Naive thymus-derived CD4-positive, alpha-beta T cell (primary cell): ENCODE measurements at regions of chr5 and their contacts with region 1.

Region 1: GRCh38 chr5:151115274-151115905 is 34.6 kb upstream of the TNIP1 start:
- DNase-seq: peak; percentile 49 to 72 (median 67)
- ATAC-seq: peak; percentile 95
- H3K4me3 ChIP-seq: no peak overlapping the region
- H3K4me3 Mint-ChIP-seq: no peak overlapping the region
- H3K27ac ChIP-seq: no peak overlapping the region
- H3K27ac Mint-ChIP-seq: peak overlapping the region in 2 of 9 donors; percentile 58 to 59
- H3K4me1 ChIP-seq: no peaks in the 10 kb centered on the region
- H3K4me1 Mint-ChIP-seq: peaks cover 4 to 17% (median 12%) of the 10 kb centered on the region in 7 donors
- H3K27me3 ChIP-seq: no peaks in the 10 kb centered on the region
- H3K27me3 Mint-ChIP-seq: no peaks in the 10 kb centered on the region

Region 2: DNA sequence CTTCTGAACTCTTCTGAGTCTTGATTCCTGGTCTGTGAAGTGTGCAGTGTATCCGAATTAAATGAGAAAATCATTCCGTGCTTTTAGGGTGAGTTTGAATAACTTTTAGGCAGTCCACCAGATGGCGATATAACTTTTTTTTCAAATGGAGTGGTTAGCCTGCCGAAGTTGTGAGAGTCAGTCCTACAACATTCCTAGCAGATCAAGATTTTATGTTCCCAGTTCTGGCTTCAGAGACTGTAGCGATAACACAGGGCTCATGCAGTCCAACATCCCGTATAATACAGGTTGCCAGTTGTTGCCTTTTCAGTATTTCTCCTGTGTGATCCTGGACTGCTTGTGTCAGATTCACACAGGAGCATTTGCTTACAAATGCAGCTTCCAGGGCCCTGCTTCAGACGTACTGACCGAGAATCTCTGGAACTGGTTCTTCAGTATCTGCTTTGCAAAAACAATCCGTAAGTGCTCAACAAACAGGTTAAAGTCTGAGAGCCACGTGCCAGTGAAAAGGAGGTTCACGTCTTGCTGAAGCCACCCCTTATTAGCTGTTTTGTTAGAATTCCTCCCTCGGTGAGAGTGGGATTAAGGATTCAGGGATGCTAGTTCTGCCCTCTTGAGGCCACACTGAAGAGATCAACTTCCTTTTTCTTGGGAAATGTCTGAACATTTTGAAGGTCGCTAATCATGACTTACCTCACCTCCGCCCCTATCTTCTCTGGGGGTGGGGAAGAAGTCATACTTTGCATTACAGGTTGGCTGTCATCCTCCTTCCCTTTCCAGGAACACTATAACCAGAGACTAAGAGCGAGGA is 314.1 kb before region 1 on chr5:
- CTCF ChIA-PET with region 1: interaction called, 5 read pairs
- POLR2A ChIA-PET with region 1: no interaction called
- intact Hi-C with region 1: loop called (anchors 1 to 5 kb)
- DNase-seq: peak in 7 of 9 donors; percentile 25 to 53 (median 43)
- ATAC-seq: peak; percentile 55
- H3K4me3 ChIP-seq: no peak overlapping the region
- H3K4me3 Mint-ChIP-seq: peak overlapping the region in 1 of 10 donors; percentile 18
- H3K27ac ChIP-seq: no peak overlapping the region
- H3K27ac Mint-ChIP-seq: no peak overlapping the region
- H3K4me1 ChIP-seq: no peaks in the 10 kb centered on the region
- H3K4me1 Mint-ChIP-seq: peaks cover 0 to 18% (median 5%) of the 10 kb centered on the region in 7 donors
- H3K27me3 ChIP-seq: no peaks in the 10 kb centered on the region
- H3K27me3 Mint-ChIP-seq: peaks cover 0 to 16% (median 5%) of the 10 kb centered on the region in 5 donors

Region 3: GRCh38 chr5:151002250-151002649 is 113.1 kb before region 1 on chr5:
- CTCF ChIA-PET with region 1: interaction called, 3 read pairs
- POLR2A ChIA-PET with region 1: no interaction called
- intact Hi-C with region 1: loop called (anchors 1 to 2 kb)
- DNase-seq: no peak
- ATAC-seq: no peak
- H3K4me3 ChIP-seq: no peak overlapping the region
- H3K4me3 Mint-ChIP-seq: no peak overlapping the region
- H3K27ac ChIP-seq: no peak overlapping the region
- H3K27ac Mint-ChIP-seq: no peak overlapping the region
- H3K4me1 ChIP-seq: no peaks in the 10 kb centered on the region
- H3K4me1 Mint-ChIP-seq: peaks cover 0 to 4% (median 0%) of the 10 kb centered on the region in 7 donors
- H3K27me3 ChIP-seq: no peaks in the 10 kb centered on the region
- H3K27me3 Mint-ChIP-seq: peaks cover 0 to 11% (median 4%) of the 10 kb centered on the region in 5 donors

Region 4: DNA sequence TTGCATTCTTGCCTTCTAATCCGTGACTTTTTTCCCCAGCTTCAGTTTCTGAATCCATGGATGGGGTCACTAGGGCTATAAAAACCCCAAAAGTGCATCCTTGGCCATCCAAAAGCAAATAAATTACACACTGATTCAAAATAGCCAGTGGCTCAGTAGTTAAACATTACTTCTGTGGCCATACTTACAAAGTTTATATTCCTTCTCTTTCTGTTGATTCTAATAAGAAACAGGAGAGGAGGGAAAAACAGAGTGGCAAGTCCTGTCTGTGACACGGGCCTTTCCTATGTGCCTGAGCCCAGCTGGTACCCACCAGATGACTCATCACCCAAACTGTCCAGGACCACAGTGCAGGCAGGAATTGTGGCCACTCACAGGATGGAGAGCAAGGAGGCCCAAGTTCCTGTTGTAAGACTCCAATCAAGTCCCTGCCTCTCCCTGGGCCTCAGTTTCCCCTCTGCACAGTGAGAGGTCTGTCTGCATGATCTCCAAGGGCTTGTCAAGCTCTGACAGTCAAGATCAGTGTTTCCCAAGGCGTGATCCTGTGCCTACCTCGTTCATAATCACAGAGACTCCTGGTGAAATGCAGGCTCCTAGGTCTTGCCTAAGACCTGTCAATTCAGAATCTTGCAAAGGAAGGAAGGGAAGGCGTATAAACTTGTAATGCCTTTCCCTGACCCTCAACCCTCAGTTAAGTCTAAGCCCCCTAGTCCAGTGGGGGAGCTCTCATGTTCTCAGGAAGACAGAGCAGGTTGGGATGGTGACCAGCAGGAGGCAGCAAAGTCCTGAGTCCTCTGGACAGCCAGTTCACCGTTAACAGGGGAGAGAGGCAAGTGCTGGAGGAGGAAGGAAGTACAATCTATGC is 64.1 kb before region 1 on chr5:
- CTCF ChIA-PET with region 1: interaction called, 238 read pairs
- POLR2A ChIA-PET with region 1: interaction called, 17 read pairs
- intact Hi-C with region 1: loop called (anchors 1 kb)
- DNase-seq: peak; percentile 39 to 68 (median 63)
- ATAC-seq: peak; percentile 85
- H3K4me3 ChIP-seq: no peak overlapping the region
- H3K4me3 Mint-ChIP-seq: no peak overlapping the region
- H3K27ac ChIP-seq: no peak overlapping the region
- H3K27ac Mint-ChIP-seq: peak overlapping the region in 7 of 9 donors; percentile 29 to 63 (median 44)
- H3K4me1 ChIP-seq: no peaks in the 10 kb centered on the region
- H3K4me1 Mint-ChIP-seq: peaks cover 0 to 33% (median 7%) of the 10 kb centered on the region in 7 donors
- H3K27me3 ChIP-seq: no peaks in the 10 kb centered on the region
- H3K27me3 Mint-ChIP-seq: no peaks in the 10 kb centered on the region

Region 5: DNA sequence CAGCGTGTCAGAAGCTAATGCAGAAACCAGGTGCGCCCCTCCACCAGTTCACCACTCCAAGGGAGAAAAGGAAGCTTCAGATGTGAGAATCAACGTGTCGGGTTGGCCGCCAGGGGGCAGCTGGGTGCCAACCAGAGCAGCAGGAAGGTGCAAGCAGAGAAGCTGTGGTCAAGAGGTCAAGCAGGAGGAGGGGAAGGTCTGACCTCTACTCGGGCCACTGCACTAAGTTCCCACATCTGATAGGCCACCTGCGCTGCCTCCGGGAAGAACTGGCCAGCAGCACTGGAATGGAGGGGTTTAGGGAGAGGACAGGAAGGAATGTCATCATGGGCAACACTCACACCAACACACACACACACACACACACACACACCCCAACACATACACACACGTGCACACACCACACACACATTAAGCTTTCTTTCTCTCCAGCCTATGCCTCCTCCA is 10.8 kb after region 1 on chr5:
- CTCF ChIA-PET with region 1: interaction called, 31 read pairs
- POLR2A ChIA-PET with region 1: interaction called, 13 read pairs
- intact Hi-C with region 1: loop called in 1 of 2 experiments (anchors 1 kb)
- DNase-seq: peak; percentile 41 to 71 (median 64)
- ATAC-seq: peak; percentile 73
- H3K4me3 ChIP-seq: no peak overlapping the region
- H3K4me3 Mint-ChIP-seq: peak overlapping the region in 9 of 10 donors; percentile 22 to 84 (median 54)
- H3K27ac ChIP-seq: peak overlapping the region; percentile 72
- H3K27ac Mint-ChIP-seq: peak overlapping the region; percentile 68 to 99 (median 91)
- H3K4me1 ChIP-seq: peaks cover under 1 to 27% of the 10 kb centered on the region in 2 donors
- H3K4me1 Mint-ChIP-seq: peaks cover 32 to 75% (median 57%) of the 10 kb centered on the region in 7 donors
- H3K27me3 ChIP-seq: no peaks in the 10 kb centered on the region
- H3K27me3 Mint-ChIP-seq: no peaks in the 10 kb centered on the region

Region 6: DNA sequence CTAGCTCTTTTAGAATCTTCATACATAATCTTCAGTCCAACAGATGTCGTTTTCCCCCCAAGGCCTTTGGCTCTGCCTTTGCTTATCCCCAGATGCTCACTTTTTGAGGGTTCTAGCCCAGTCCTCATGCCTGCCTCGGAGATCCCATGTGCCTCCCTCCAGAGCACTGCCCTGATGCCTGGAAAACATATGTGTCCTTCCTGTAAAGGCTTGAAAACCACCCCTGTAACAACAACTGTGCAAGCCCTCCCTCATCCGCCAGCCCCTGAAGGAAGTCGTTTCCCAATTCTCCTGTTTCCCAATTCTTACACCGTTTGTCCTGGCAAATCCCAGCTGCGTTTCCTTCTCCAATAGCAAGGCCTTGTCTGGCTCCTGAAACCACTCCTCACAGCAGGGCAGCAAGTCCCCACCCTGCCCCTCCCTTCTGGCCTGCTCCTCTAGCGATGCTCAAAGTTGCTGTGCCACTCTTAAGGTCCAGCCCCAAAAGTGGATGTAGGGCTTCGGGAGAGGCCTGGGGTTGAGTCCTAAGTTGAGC is 384.2 kb after region 1 on chr5:
- CTCF ChIA-PET with region 1: no interaction called
- POLR2A ChIA-PET with region 1: no interaction called
- intact Hi-C with region 1: no loop called
- DNase-seq: no peak
- ATAC-seq: no peak
- H3K4me3 ChIP-seq: no peak overlapping the region
- H3K4me3 Mint-ChIP-seq: no peak overlapping the region
- H3K27ac ChIP-seq: no peak overlapping the region
- H3K27ac Mint-ChIP-seq: peak overlapping the region in 2 of 9 donors; percentile 17 to 31
- H3K4me1 ChIP-seq: no peaks in the 10 kb centered on the region
- H3K4me1 Mint-ChIP-seq: peaks cover 5 to 6% (median 6%) of the 10 kb centered on the region in 7 donors
- H3K27me3 ChIP-seq: no peaks in the 10 kb centered on the region
- H3K27me3 Mint-ChIP-seq: no peaks in the 10 kb centered on the region